Gastrocnemius medialis (tissue), 4 donors: ENCODE measurements at regions of chr2 and their contacts with region 1.

Region 1: DNA sequence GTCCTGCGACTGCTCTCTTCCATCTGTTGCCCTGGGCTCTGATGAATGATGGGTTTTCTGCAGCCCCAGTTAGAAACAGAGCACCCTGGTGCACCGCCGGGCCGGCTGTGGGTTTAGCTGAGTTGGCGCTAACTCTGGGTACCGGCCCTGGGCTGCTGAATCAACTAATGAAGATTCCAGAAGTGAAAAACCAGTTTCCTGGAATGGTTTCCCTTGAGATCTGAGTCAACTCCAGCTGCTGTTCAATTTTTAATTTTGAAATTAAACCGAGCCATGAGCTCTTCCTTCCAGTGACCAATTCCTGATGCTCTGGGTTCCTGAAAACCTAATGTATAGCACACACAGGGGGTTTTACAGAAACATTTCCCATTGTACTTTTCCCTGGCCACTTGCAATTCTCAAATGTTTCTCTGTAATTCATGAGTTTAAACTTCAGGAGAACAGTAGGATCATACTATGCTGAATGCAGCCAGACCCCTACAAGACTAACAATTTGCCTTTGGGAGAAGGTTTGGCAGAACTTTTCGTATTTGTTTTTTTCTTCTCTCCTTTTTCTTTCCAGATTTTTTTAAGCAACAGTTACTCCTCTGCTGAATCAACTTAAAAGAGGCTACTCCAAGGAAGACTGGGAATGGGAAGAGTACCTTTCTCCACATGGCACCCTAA is 5.5 kb downstream of the COL6A3 start:
- DNase-seq: no peak
- ATAC-seq: peak in 1 of 2 donors; percentile 30
- H3K4me3 ChIP-seq: peak overlapping the region in 2 of 4 donors; percentile 4 to 54
- H3K27ac ChIP-seq: peak overlapping the region; percentile 71 to 80 (median 74)
- H3K4me1 ChIP-seq: peaks cover 0 to 9% of the 10 kb centered on the region in 2 donors
- H3K27me3 ChIP-seq: no peaks in the 10 kb centered on the region
- CTCF ChIP-seq: no peak
- POLR2A ChIP-seq: peak; percentile 19 to 33

Region 2: GRCh38 chr2:237154082-237154638 is 254.3 kb before region 1 on chr2:
- in situ Hi-C with region 1: loop called in 1 of 4 experiments (anchors 5 kb)
- intact Hi-C with region 1: loop called (anchors 10 kb)
- DNase-seq: no peak
- ATAC-seq: peak in 1 of 2 donors; percentile 29
- H3K4me3 ChIP-seq: no peak overlapping the region
- H3K27ac ChIP-seq: peak overlapping the region; percentile 66 to 81 (median 78)
- H3K4me1 ChIP-seq: peaks cover 2 to 8% of the 10 kb centered on the region in 2 donors
- H3K27me3 ChIP-seq: no peaks in the 10 kb centered on the region
- CTCF ChIP-seq: peak; percentile 43 to 55 (median 50)
- POLR2A ChIP-seq: no peak

Region 3: GRCh38 chr2:237165405-237166276 is 242.8 kb before region 1 on chr2:
- in situ Hi-C with region 1: loop called in 1 of 4 experiments (anchors 10 kb)
- intact Hi-C with region 1: loop called (anchors 2 kb)
- DNase-seq: no peak
- ATAC-seq: no peak
- H3K4me3 ChIP-seq: no peak overlapping the region
- H3K27ac ChIP-seq: no peak overlapping the region
- H3K4me1 ChIP-seq: no peaks in the 10 kb centered on the region
- H3K27me3 ChIP-seq: no peaks in the 10 kb centered on the region
- CTCF ChIP-seq: peak in 4 of 5 experiments; percentile 19 to 47 (median 31)
- POLR2A ChIP-seq: no peak